SK-N-SH (cell line): ENCODE measurements at regions of chr6 and their contacts with region 1.

Region 1: DNA sequence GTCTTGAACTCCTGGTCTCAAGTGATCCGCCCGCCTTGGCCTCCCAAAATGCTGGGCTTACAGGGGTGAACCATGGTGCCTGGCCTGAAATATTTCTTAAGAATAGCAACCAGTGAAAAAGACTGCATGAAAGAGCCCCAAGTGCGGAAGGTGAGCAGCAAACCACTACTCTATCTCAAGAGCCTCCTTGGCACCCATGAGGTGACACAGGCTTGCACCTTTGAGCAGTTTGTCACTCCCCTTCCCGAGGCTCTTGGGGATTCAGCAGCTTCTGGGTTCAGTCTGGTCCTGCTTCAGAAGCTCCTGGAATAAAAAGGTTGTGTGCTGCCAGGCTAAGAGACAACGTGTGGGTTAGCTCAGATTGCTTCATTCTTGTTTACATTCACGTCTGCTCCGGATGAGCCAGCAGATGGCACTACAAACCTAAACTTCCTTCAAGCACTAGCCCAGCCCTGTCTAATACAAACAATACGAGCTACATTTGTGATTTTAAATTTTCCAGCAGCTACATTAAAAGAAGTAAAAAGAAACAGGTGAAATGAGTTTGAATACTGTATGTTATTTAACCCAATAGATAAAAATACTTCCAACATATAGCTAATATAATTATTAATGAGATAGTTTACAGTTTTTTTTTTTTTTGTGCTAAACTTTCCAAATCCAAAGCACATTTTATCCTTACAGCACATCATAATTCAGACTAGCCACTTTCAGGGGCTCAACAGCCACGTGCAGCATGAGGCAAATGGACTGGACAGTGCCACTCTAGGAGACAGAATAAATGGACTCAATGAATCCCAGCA is 46.2 kb downstream of the GJA10 start:
- DNase-seq: peak; percentile 83
- H3K4me3 ChIP-seq: no peak overlapping the region; a peak in 1 of 4 replicates
- H3K27ac ChIP-seq: no peak overlapping the region
- H3K4me1 ChIP-seq: no peaks in the 10 kb centered on the region; a peak in 1 of 4 replicates
- H3K27me3 ChIP-seq: no peaks in the 10 kb centered on the region
- CTCF ChIP-seq: peak; percentile 82
- EP300 ChIP-seq: no peak
- RAD21 ChIP-seq: peak; percentile 98

Region 2: DNA sequence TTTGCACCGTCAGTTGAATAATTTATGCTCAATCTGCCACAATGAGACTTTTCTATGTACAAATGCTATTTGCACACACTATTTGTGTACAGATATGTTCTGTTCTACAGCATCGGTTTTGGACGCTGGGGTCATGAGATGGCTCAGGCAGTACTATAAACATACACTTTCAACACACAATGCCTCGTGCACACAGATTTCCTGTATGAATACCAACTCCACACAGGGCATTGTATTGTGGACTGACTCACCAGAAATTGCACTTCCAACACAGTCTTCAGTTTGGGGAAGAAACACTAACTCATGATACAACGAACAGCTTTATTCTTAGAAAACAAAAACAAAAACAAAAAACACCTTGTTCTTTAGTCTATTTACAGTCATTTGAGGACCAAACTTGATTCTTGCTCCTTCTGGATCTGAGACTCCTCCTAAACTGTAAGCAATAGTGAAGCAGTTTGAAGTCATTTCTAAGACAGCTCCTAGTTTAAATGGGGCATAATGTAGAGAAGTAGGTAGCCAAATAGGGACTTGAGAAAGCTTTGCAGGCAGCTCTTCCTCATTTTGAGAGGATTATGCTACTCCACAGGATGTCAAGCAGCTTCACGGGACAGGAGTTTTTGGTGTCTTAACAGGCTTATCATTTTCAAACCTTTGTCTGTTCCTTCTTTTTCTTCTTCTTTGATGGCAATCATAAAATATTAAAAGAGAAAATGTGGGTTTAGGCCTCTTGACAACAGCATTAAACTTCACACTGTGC is 12.5 kb before region 1 on chr6:
- CTCF ChIA-PET with region 1: interaction called, 20 read pairs
- POLR2A ChIA-PET with region 1: no interaction called
- DNase-seq: no peak
- H3K4me3 ChIP-seq: no peak overlapping the region
- H3K27ac ChIP-seq: peak overlapping the region in 1 of 2 experiments; percentile 47; a peak in 2 of 4 replicates
- H3K4me1 ChIP-seq: peaks cover 3 to 7% of the 10 kb centered on the region in 2 experiments; a peak in 2 of 4 replicates
- H3K27me3 ChIP-seq: no peaks in the 10 kb centered on the region
- CTCF ChIP-seq: no peak
- EP300 ChIP-seq: no peak
- RAD21 ChIP-seq: no peak

Region 3: DNA sequence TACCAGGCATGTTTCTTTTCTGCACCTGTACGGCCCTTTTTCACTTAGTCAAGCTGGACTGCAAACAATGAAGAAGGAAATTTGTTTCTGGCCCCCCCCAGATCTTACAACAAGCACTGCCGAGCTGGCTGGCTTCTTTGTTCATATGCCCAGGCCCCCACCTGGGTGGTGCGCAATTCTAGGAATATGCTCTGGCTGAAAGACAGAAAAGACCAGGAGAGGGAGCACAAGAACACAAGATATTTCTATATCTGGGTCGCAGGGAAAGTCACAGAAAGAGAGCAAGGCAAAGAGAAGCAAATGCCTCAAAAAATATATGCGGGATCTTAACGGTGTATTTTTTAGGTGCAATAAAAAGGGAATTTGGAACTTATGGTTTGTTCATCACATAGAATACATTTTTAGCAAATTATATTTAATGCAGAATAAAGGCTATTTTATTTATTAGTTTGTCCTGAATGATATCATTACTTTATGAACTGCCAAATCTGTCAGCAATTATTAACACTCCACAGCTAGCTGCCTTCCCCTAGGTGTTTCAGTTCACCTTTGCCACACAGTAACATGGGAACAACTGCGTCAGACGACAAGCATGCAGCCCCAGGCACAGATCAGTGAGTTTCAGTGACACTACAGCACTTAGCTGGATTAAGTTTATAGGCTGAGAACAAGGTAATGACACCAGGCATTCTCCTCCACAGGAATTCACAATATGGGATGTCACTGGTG is 30.3 kb after region 1 on chr6:
- CTCF ChIA-PET with region 1: interaction called, 37 read pairs
- POLR2A ChIA-PET with region 1: interaction called, 4 read pairs
- DNase-seq: peak; percentile 67
- H3K4me3 ChIP-seq: no peak overlapping the region
- H3K27ac ChIP-seq: peak overlapping the region in 1 of 2 experiments; percentile 58; a peak in 2 of 4 replicates
- H3K4me1 ChIP-seq: peaks cover 0 to 24% of the 10 kb centered on the region in 2 experiments; a peak in 2 of 4 replicates
- H3K27me3 ChIP-seq: 0 out of 2 replicates have a peak, but pooled peaks cover under 1% of the 10 kb centered on the region
- CTCF ChIP-seq: peak; percentile 79
- EP300 ChIP-seq: no peak
- RAD21 ChIP-seq: peak; percentile 95

Region 4: DNA sequence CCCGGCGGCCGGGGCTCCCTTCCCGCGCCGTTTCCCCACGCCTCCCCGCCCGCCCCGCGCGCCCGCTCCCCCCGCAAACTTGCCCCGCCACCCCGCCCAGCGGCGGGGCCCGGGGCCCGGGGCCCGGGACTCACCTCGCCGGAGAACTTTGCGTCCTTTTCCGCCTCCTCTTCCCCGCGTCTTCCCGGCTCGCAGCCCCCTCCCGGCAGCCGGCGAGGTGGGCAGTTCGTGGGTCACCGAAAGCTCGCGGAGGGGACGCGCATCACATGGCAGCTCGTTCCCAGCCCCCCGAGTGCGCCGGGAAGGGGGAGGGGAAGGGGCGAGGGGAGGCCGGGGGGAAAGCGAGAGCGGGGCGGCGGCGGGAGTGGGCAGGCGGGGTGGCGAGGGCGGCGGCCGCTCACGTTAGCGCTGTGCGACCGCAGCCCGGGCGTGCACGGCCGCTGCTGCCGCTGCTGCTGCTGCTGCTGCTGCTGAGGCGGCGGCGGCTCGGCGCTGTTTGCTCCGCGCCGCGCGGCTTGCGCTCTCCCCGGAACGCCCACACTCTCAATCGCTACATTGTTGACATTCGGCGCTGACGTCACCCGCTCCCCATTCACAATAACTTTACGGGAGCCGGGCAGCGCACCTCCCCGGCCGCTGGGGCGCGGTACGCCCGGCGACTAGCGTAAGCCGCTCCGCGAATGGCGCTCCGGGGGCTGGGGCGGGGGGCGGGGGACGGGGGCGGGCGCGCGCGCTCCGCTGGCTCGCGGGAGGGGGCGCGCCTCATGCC is 356.1 kb after region 1 on chr6 and contains the start of gene BACH2:
- CTCF ChIA-PET with region 1: interaction called, 11 read pairs
- POLR2A ChIA-PET with region 1: no interaction called
- DNase-seq: peak; percentile 88
- H3K4me3 ChIP-seq: peak within 1 kb of the TSS; percentile 59 to 63
- H3K27ac ChIP-seq: peak within 1 kb of the TSS in 1 of 2 experiments; percentile 69; a peak in 1 of 4 replicates
- H3K4me1 ChIP-seq: peaks cover 0 to 30% of the 10 kb centered on the region in 2 experiments; a peak in 2 of 4 replicates
- H3K27me3 ChIP-seq: peaks cover 29% of the 10 kb centered on the region
- CTCF ChIP-seq: no peak
- EP300 ChIP-seq: no peak
- RAD21 ChIP-seq: no peak
- polyA plus RNA-seq, gene BACH2: 0.46 and 0.50 TPM in 2 replicates

Region 5: GRCh38 chr6:90444160-90444714 is 503.8 kb after region 1 on chr6:
- CTCF ChIA-PET with region 1: interaction called, 11 read pairs
- POLR2A ChIA-PET with region 1: no interaction called
- DNase-seq: no peak
- H3K4me3 ChIP-seq: no peak overlapping the region
- H3K27ac ChIP-seq: no peak overlapping the region
- H3K4me1 ChIP-seq: peaks cover 0 to 18% of the 10 kb centered on the region in 2 experiments; a peak in 2 of 4 replicates
- H3K27me3 ChIP-seq: peaks cover 5% of the 10 kb centered on the region
- CTCF ChIP-seq: no peak
- EP300 ChIP-seq: no peak
- RAD21 ChIP-seq: no peak

Region 6: DNA sequence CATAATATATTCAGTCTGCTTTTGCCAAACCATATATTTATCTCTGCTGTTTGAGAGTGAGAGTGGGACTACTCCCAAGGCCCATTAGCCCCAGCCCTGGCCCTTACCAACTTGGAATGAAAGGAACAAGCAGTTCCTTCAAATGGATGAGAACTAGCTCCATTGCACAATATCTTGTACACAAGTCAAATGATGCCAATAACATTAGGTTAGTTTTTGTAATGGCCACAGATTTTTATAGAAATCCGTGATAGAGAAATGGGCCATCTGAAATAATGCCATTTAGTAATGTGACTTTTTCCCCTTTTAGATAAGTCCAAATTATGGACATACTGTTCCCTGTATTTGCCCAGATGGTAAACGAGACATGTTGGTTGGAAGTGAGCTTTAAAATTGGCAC is 529.5 kb after region 1 on chr6:
- CTCF ChIA-PET with region 1: interaction called, 169 read pairs
- POLR2A ChIA-PET with region 1: interaction called, 3 read pairs
- DNase-seq: no peak
- H3K4me3 ChIP-seq: no peak overlapping the region
- H3K27ac ChIP-seq: no peak overlapping the region
- H3K4me1 ChIP-seq: peaks cover 0 to 4% of the 10 kb centered on the region in 2 experiments; a peak in 2 of 4 replicates
- H3K27me3 ChIP-seq: no peaks in the 10 kb centered on the region
- CTCF ChIP-seq: no peak
- EP300 ChIP-seq: no peak
- RAD21 ChIP-seq: no peak